ENCODE measurements at regions of chr19 and their contacts with region 1.

Region 1: DNA sequence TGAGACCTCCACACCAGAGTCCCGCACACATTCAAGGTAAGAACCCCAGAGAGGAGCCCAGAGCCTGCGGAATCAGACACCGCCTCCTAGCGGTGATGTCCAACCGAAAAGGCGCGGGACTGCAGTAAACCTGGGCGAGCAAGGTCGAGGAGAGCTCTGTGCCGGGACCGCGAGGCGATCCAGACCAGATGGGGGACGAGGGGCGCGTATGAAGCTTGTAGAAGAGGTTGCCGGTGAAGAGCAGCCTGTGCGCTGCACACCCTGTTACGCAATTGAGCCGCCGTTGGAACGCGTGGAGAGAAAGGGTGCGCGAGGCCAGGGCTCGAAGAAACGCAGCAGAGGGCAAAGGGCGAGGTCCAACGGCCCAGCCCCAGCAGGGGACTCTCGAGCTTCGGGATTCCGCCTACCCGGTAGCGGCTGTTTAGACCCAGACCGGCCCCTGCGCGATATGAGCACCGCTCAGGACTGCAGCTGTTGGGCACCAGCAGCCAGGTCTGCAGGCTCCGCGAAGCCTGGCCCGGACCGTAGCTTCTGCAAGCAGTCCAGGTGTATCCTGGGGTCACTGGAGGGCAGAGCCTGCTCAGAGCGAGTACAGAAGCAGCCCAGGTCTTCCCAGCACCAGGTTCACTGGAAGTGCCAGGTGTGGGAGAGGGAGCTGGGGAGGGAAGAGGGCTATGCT is 65.9 kb upstream of the ZNF599 start:
- DNase-seq: peak in 8 of 14 experiments; percentile 7 to 60 (median 28)
- ATAC-seq: peak; percentile 62
- H3K4me3 ChIP-seq: no peak overlapping the region
- H3K4me3 Mint-ChIP-seq: peak overlapping the region; percentile 52
- H3K27ac ChIP-seq: no peak overlapping the region
- H3K27ac Mint-ChIP-seq: no peak overlapping the region
- H3K4me1 ChIP-seq: peaks cover 12% of the 10 kb centered on the region
- H3K4me1 Mint-ChIP-seq: peaks cover 33% of the 10 kb centered on the region
- H3K27me3 ChIP-seq: no peaks in the 10 kb centered on the region
- H3K27me3 Mint-ChIP-seq: no peaks in the 10 kb centered on the region
- CTCF ChIP-seq: peak; percentile 38

Region 2: DNA sequence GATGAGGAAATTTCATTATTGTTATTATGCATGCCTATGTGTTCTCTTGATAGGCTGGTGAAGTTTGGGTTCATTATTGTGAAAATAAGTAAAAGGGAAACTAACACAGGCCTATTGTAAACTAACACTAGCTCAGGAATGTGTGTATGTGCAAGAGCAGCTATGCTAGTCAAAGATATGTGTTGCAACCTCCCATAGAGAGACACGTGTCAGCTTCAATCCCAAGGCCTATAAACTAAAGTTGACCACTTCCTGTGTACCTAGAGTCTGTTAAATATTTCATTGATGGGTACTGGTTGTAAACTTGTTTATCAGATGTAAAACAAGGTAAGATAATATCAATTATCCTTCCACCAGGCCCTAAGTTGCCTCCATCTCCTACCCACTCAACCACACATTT is 43.1 kb after region 1 on chr19:
- CTCF ChIA-PET with region 1: no interaction called
- POLR2A ChIA-PET with region 1: no interaction called
- intact Hi-C with region 1: loop called in 1 of 2 experiments (anchors 5 kb)
- DNase-seq: no peak
- ATAC-seq: no peak
- H3K4me3 ChIP-seq: no peak overlapping the region
- H3K4me3 Mint-ChIP-seq: no peak overlapping the region
- H3K27ac ChIP-seq: no peak overlapping the region
- H3K27ac Mint-ChIP-seq: no peak overlapping the region
- H3K4me1 ChIP-seq: no peaks in the 10 kb centered on the region
- H3K4me1 Mint-ChIP-seq: no peaks in the 10 kb centered on the region
- H3K27me3 ChIP-seq: no peaks in the 10 kb centered on the region
- H3K27me3 Mint-ChIP-seq: peaks cover 9% of the 10 kb centered on the region
- CTCF ChIP-seq: no peak

Region 3: GRCh38 chr19:34926685-34927375 is 87.9 kb after region 1 on chr19 and contains the start of gene ZNF30:
- CTCF ChIA-PET with region 1: interaction called, 3 read pairs
- POLR2A ChIA-PET with region 1: interaction called, 4 read pairs
- intact Hi-C with region 1: loop called in 1 of 2 experiments (anchors 5 kb)
- DNase-seq: peak; percentile 62 to 90 (median 79)
- ATAC-seq: peak; percentile 93
- H3K4me3 ChIP-seq: peak within 1 kb of the TSS; percentile 89
- H3K4me3 Mint-ChIP-seq: peak within 1 kb of the TSS; percentile 91
- H3K27ac ChIP-seq: no peak within 1 kb of the TSS
- H3K27ac Mint-ChIP-seq: peak within 1 kb of the TSS; percentile 71
- H3K4me1 ChIP-seq: peaks cover 13% of the 10 kb centered on the region
- H3K4me1 Mint-ChIP-seq: peaks cover 28% of the 10 kb centered on the region
- H3K27me3 ChIP-seq: peaks cover 0 to 7% of the 10 kb centered on the region in 2 experiments
- H3K27me3 Mint-ChIP-seq: peaks cover 9% of the 10 kb centered on the region
- CTCF ChIP-seq: no peak
- total RNA-seq, gene ZNF30: 0.84 to 1.1 TPM

Region 4: DNA sequence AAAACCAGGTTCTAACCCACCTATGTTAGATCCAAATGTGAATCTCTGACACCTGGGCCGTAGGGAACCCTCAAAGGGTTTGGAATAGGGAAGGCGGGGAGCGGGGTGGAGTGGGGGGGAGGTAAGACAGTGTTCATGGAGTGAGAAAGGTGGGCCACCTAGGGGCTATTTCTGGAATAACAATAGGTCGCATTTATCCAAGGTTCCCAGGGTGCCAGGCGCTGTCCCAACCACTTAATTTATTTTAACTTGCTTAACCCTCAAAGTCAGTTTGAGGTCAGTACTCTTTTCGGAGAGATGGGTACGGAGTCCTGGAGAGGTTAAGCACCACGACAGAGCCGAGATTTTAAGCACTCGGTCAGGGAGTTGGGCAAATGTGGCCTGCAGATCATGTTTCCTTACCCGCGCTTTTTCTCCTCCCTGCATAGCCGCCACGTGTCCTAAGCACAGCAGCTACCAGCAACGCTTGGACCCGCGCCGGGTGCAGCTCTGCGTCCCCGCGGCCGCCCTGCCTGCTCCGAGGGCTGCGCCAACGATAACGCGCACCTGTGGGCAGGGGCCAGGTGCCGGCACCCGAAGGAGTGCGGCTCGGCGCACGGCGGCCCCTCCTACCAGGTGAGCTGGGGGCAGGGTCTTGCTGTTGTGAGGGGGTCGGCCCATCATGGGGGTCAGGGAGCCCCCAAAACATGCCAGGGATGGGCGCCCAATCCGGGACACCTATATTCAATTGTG is 251.8 kb after region 1 on chr19:
- CTCF ChIA-PET with region 1: no interaction called
- POLR2A ChIA-PET with region 1: no interaction called
- intact Hi-C with region 1: loop called in 1 of 2 experiments (anchors 5 kb)
- DNase-seq: peak in 11 of 14 experiments; percentile 5 to 70 (median 23)
- ATAC-seq: peak; percentile 80
- H3K4me3 ChIP-seq: no peak overlapping the region
- H3K4me3 Mint-ChIP-seq: no peak overlapping the region
- H3K27ac ChIP-seq: no peak overlapping the region
- H3K27ac Mint-ChIP-seq: no peak overlapping the region
- H3K4me1 ChIP-seq: peaks cover 11% of the 10 kb centered on the region
- H3K4me1 Mint-ChIP-seq: peaks cover 5% of the 10 kb centered on the region
- H3K27me3 ChIP-seq: peaks cover 10 to 11% of the 10 kb centered on the region in 2 experiments
- H3K27me3 Mint-ChIP-seq: peaks cover 12% of the 10 kb centered on the region
- CTCF ChIP-seq: peak; percentile 78

Measured in CD4-positive, alpha-beta T cell (primary cell).